A673 (cell line): ENCODE measurements at regions of chr14 and their contacts with region 1.

Region 1: DNA sequence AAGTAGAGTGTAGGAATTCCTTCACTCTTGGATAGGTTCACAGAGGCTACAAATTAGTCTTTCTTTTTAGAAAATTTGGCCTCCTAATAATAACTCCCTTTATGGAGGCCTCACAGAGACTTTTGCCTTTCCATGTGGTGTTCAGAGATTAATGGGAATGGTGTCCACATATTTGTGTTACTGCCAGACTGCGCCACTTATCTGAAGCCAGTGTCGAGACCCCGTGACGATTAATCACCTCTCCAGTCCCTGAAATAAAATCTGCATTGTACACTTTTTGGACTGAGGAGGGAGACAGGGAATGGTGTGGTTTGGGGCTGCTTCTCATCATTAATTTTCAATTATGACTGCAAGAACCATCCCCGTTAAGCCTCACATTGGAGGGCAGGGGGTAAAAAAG is 980.5 kb downstream of the FLRT2 start:
- DNase-seq: no peak
- H3K4me3 ChIP-seq: no peak overlapping the region
- H3K27ac ChIP-seq: peak overlapping the region; percentile 89
- H3K4me1 ChIP-seq: peaks cover 43% of the 10 kb centered on the region
- H3K27me3 ChIP-seq: no peaks in the 10 kb centered on the region
- CTCF ChIP-seq: no peak

Region 2: GRCh38 chr14:86462193-86462753 is 48.2 kb before region 1 on chr14:
- CTCF ChIA-PET with region 1: no interaction called
- POLR2A ChIA-PET with region 1: no interaction called
- intact Hi-C with region 1: loop called (anchors 2 kb)
- DNase-seq: peak; percentile 46
- H3K4me3 ChIP-seq: no peak overlapping the region
- H3K27ac ChIP-seq: no peak overlapping the region
- H3K4me1 ChIP-seq: peaks cover 10% of the 10 kb centered on the region
- H3K27me3 ChIP-seq: no peaks in the 10 kb centered on the region
- CTCF ChIP-seq: 0 out of 2 replicates have a peak, but pooled peaks have one; percentile 39

Region 3: GRCh38 chr14:86654558-86655184 is 144.2 kb after region 1 on chr14:
- CTCF ChIA-PET with region 1: no interaction called
- POLR2A ChIA-PET with region 1: no interaction called
- intact Hi-C with region 1: loop called (anchors 5 kb)
- DNase-seq: peak; percentile 86
- H3K4me3 ChIP-seq: no peak overlapping the region
- H3K27ac ChIP-seq: no peak overlapping the region
- H3K4me1 ChIP-seq: peaks cover 21% of the 10 kb centered on the region
- H3K27me3 ChIP-seq: no peaks in the 10 kb centered on the region
- CTCF ChIP-seq: peak; percentile 77

Region 4: DNA sequence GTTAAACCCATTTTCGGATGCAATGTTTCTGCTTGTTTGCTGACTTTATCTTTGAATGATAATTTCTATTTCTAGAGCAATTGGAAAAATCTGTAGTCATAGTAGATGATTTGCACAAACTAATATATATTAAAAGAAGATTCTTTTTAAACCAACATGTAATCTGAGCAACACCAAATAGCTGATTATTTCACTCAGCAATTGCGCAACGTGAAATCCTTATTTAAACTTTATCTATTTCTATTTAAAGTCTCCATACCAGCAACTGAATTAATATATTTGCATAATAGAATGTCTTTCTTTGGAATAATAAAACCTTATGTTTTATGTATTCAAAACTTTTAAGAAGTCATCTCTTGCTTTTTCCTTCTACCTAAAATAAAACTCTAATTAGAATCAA is 151.8 kb after region 1 on chr14:
- CTCF ChIA-PET with region 1: no interaction called
- POLR2A ChIA-PET with region 1: no interaction called
- intact Hi-C with region 1: loop called (anchors 2 kb)
- DNase-seq: no peak
- H3K4me3 ChIP-seq: no peak overlapping the region
- H3K27ac ChIP-seq: no peak overlapping the region
- H3K4me1 ChIP-seq: peaks cover 8% of the 10 kb centered on the region
- H3K27me3 ChIP-seq: no peaks in the 10 kb centered on the region
- CTCF ChIP-seq: no peak

Region 5: DNA sequence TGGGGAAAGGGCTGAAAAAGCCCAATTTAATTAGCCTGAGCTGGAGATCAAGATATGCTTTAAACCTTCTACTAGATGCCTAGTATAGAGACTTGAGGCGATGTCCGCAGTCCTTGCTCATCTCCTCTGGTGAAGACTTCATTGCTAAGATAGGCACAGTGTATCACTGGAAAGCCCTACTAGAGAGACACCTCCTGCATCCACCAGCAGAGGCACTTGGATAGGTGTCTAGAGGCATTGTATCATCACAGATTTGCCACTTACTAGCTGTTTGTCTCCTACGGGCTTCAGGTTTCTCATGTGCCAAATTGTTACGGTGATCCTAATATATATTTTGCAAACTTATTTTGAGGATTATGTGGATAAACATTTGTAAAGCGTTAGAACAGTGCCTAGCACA is 433.9 kb after region 1 on chr14:
- CTCF ChIA-PET with region 1: no interaction called
- POLR2A ChIA-PET with region 1: no interaction called
- intact Hi-C with region 1: loop called (anchors 5 kb)
- DNase-seq: peak; percentile 33
- H3K4me3 ChIP-seq: no peak overlapping the region
- H3K27ac ChIP-seq: peak overlapping the region; percentile 71
- H3K4me1 ChIP-seq: peaks cover 43% of the 10 kb centered on the region
- H3K27me3 ChIP-seq: no peaks in the 10 kb centered on the region
- CTCF ChIP-seq: 0 out of 2 replicates have a peak, but pooled peaks have one; percentile 12

Region 6: GRCh38 chr14:87002776-87003175 is 492.3 kb after region 1 on chr14:
- CTCF ChIA-PET with region 1: no interaction called
- POLR2A ChIA-PET with region 1: no interaction called
- intact Hi-C with region 1: loop called (anchors 5 kb)
- DNase-seq: peak; percentile 50
- H3K4me3 ChIP-seq: no peak overlapping the region
- H3K27ac ChIP-seq: no peak overlapping the region
- H3K4me1 ChIP-seq: peaks cover 43% of the 10 kb centered on the region
- H3K27me3 ChIP-seq: no peaks in the 10 kb centered on the region
- CTCF ChIP-seq: peak; percentile 54